Naive thymus-derived CD4-positive, alpha-beta T cell (primary cell): ENCODE measurements at regions of chr7 and their contacts with region 1.

Region 1: GRCh38 chr7:143416565-143417149 is 8.0 kb upstream of the EPHA1 start:
- DNase-seq: peak in 6 of 9 donors; percentile 34 to 58 (median 52)
- ATAC-seq: peak; percentile 74
- H3K4me3 ChIP-seq: no peak overlapping the region
- H3K4me3 Mint-ChIP-seq: no peak overlapping the region
- H3K27ac ChIP-seq: no peak overlapping the region
- H3K27ac Mint-ChIP-seq: no peak overlapping the region
- H3K4me1 ChIP-seq: peaks cover 0 to 3% of the 10 kb centered on the region in 2 donors
- H3K4me1 Mint-ChIP-seq: peaks cover 2 to 56% (median 46%) of the 10 kb centered on the region in 7 donors
- H3K27me3 ChIP-seq: no peaks in the 10 kb centered on the region
- H3K27me3 Mint-ChIP-seq: peaks cover 0 to 21% (median 0%) of the 10 kb centered on the region in 5 donors

Region 2: GRCh38 chr7:143305423-143306070 is 111.1 kb before region 1 on chr7:
- CTCF ChIA-PET with region 1: interaction called, 14 read pairs
- POLR2A ChIA-PET with region 1: interaction called, 3 read pairs
- intact Hi-C with region 1: loop called (anchors 1 to 5 kb)
- DNase-seq: peak; percentile 32 to 62 (median 54)
- ATAC-seq: peak; percentile 87
- H3K4me3 ChIP-seq: no peak overlapping the region
- H3K4me3 Mint-ChIP-seq: peak overlapping the region in 1 of 10 donors; percentile 22
- H3K27ac ChIP-seq: no peak overlapping the region
- H3K27ac Mint-ChIP-seq: peak overlapping the region; percentile 4 to 85 (median 30)
- H3K4me1 ChIP-seq: peaks cover 0 to 2% of the 10 kb centered on the region in 2 donors
- H3K4me1 Mint-ChIP-seq: peaks cover 20 to 72% (median 37%) of the 10 kb centered on the region in 7 donors
- H3K27me3 ChIP-seq: no peaks in the 10 kb centered on the region
- H3K27me3 Mint-ChIP-seq: no peaks in the 10 kb centered on the region

Region 3: DNA sequence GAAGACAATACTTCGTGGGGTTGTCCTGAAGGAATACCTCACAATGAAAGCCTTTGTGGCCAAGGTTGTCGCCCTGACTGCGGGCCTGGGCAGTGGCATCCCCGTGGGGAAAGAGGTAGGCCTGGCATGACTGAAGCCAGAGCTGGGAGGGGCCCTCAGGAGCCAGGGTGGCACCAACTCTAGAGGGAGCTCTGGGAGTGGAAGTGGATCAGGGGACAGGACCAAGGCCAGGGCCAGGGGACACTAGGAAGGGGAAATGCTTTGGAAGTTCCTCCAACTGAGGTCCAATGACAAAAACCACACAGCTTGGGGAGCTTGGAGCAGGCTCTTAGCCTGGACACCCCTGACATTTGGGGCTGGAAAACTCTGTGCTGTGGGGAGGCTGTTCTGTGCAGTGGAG is 94.9 kb before region 1 on chr7:
- CTCF ChIA-PET with region 1: no interaction called
- POLR2A ChIA-PET with region 1: no interaction called
- intact Hi-C with region 1: loop called in 1 of 2 experiments (anchors 1 kb)
- DNase-seq: no peak
- ATAC-seq: peak; percentile 56
- H3K4me3 ChIP-seq: no peak overlapping the region
- H3K4me3 Mint-ChIP-seq: no peak overlapping the region
- H3K27ac ChIP-seq: no peak overlapping the region
- H3K27ac Mint-ChIP-seq: no peak overlapping the region
- H3K4me1 ChIP-seq: peaks cover 0 to 9% of the 10 kb centered on the region in 2 donors
- H3K4me1 Mint-ChIP-seq: peaks cover 0 to 23% (median 9%) of the 10 kb centered on the region in 7 donors
- H3K27me3 ChIP-seq: no peaks in the 10 kb centered on the region
- H3K27me3 Mint-ChIP-seq: peaks cover 0 to 17% (median 0%) of the 10 kb centered on the region in 5 donors